ENCODE measurements at regions of chr16 and their contacts with region 1.

Region 1: DNA sequence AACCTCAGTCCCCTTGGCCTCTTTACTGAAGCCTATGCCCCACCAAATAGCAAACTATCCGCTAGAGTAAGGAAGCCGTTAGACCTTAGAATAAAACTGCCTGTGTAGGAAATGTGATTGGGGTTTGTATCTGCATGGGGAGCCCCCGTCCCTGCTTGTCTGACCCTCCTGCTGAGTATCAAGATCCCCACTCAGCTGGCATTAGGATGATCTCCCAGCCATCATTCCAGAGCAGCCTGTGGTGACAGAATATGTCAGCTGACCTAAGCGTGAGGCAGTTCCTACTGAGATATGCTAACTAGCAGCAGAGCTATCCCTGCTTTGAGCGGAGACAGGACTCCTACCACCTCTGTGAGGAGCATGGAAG is 645 bp upstream of the GFOD2 start:
- DNase-seq: no peak
- ATAC-seq: peak; percentile 43
- H3K4me3 ChIP-seq: peak overlapping the region; percentile 97
- H3K27ac ChIP-seq: no peak overlapping the region
- H3K4me1 ChIP-seq: peaks cover 31% of the 10 kb centered on the region
- H3K27me3 ChIP-seq: no peaks in the 10 kb centered on the region
- CTCF ChIP-seq: no peak

Region 2: DNA sequence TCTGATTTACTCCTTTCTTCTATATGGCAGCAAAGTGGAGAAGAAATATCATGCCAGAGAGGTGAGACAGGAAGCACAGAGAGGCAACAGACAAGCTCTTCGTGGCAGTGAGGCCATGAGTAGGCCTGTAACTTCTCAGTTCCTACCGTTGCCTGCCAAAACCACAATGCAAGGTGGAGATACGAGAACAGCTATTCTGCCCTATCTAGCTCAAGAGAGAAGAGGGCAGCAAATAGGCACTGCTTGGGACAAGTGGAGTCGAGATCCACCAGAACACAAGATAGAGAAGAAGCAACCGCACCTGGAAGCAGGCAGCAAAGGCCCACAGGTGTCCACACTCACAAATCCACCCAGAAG is 61.8 kb after region 1 on chr16:
- CTCF ChIA-PET with region 1: no interaction called
- POLR2A ChIA-PET with region 1: interaction called, 10 read pairs
- intact Hi-C with region 1: no loop called
- DNase-seq: no peak
- ATAC-seq: no peak
- H3K4me3 ChIP-seq: no peak overlapping the region
- H3K27ac ChIP-seq: no peak overlapping the region
- H3K4me1 ChIP-seq: no peaks in the 10 kb centered on the region
- H3K27me3 ChIP-seq: no peaks in the 10 kb centered on the region
- CTCF ChIP-seq: no peak

Region 3: GRCh38 chr16:67806428-67807147 is 86.8 kb after region 1 on chr16 and contains the starts of genes RANBP10 and TSNAXIP1:
- CTCF ChIA-PET with region 1: no interaction called
- POLR2A ChIA-PET with region 1: no interaction called
- intact Hi-C with region 1: loop called (anchors 5 kb)
- DNase-seq: peak; percentile 95
- ATAC-seq: peak; percentile 93
- H3K4me3 ChIP-seq: peak within 1 kb of the TSS; percentile 99
- H3K27ac ChIP-seq: no peak within 1 kb of the TSS
- H3K4me1 ChIP-seq: peaks cover 10% of the 10 kb centered on the region
- H3K27me3 ChIP-seq: no peaks in the 10 kb centered on the region
- CTCF ChIP-seq: no peak
- total RNA-seq, gene RANBP10: 5.5 and 7.7 TPM in 2 replicates
- total RNA-seq, gene TSNAXIP1: 0.44 and 0.86 TPM in 2 replicates

Measured in PC-3 (cell line).